Gastrocnemius medialis (tissue), 4 donors: ENCODE measurements at regions of chr22 and their contacts with region 1.

Region 1: GRCh38 chr22:37218771-37219411 is 6.6 kb upstream of the SSTR3 start:
- DNase-seq: no peak
- ATAC-seq: no peak
- H3K4me3 ChIP-seq: no peak overlapping the region
- H3K27ac ChIP-seq: no peak overlapping the region
- H3K4me1 ChIP-seq: no peaks in the 10 kb centered on the region
- H3K27me3 ChIP-seq: peaks cover 0 to 22% (median 0%) of the 10 kb centered on the region in 3 donors
- CTCF ChIP-seq: no peak
- POLR2A ChIP-seq: no peak

Region 2: GRCh38 chr22:37077884-37078485 is 140.9 kb before region 1 on chr22:
- in situ Hi-C with region 1: loop called in 1 of 4 experiments (anchors 25 kb)
- intact Hi-C with region 1: no loop called
- DNase-seq: peak in 1 of 2 donors; percentile 21
- ATAC-seq: peak in 1 of 2 donors; percentile 36
- H3K4me3 ChIP-seq: no peak overlapping the region
- H3K27ac ChIP-seq: no peak overlapping the region
- H3K4me1 ChIP-seq: no peaks in the 10 kb centered on the region
- H3K27me3 ChIP-seq: peaks cover 7 to 18% (median 12%) of the 10 kb centered on the region in 3 donors
- CTCF ChIP-seq: peak; percentile 68 to 95 (median 84)
- POLR2A ChIP-seq: no peak